PC-9 (cell line): ENCODE measurements at regions of chr6 and their contacts with region 1.

Region 1: DNA sequence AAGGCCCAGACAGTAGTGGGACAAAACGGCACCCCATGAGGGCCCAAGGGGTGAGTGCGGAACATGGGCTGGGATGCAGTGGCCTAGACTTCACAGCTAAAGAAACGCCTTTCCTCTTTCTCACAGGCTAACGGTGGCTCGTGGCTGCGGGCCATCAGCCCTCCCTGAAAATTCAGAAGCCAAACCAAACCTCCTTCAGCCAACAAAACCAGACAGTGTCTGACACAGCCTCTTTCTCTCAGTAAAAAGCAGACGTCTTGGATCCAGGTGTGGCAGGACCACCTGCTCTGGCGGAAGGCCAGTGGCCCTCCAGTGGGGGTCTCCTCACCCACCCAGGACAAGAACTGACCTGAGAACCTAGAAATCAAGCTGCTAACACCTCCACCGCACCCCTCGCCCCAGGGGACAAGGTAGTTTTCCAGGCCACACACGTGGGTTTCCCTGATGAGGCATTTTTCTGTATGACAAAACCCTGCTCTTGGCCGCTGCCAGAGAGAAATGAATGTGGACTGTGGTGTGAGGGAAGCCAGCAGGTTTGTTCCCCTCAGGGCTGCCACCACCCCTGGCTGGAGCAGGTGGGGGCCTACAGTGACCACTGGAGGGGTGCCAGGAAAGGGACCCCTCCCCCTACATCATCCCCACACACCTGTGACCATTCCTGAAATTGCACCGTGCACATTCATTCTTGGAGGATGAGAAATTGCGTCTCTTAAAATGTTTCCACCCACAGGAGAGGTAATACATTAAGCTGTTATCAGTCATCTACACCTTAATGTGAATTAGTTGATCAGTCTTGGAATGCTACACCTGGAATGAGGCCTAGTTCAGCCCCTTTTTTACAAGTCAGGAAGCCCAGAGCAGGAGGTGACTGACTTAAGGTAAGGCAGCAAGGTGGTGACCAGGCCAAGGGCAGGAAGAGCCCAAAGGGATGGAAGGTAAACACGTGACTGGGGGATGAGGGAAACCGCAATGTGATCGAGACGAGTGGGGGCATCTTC is 76.7 kb upstream of the PIM1 start:
- DNase-seq: peak; percentile 95 to 99
- H3K4me3 ChIP-seq: peak overlapping the region; percentile 15; the same call in 1 of the 2 replicates
- H3K27ac ChIP-seq: peak overlapping the region; percentile 93
- H3K4me1 ChIP-seq: peaks cover 50% of the 10 kb centered on the region
- H3K27me3 ChIP-seq: no peaks in the 10 kb centered on the region
- CTCF ChIP-seq: no peak

Region 2: GRCh38 chr6:36780442-36781177 is 312.6 kb before region 1 on chr6:
- CTCF ChIA-PET with region 1: no interaction called
- POLR2A ChIA-PET with region 1: interaction called, 10 read pairs
- intact Hi-C with region 1: no loop called
- DNase-seq: no peak
- H3K4me3 ChIP-seq: no peak overlapping the region
- H3K27ac ChIP-seq: no peak overlapping the region
- H3K4me1 ChIP-seq: peaks cover 7% of the 10 kb centered on the region
- H3K27me3 ChIP-seq: no peaks in the 10 kb centered on the region
- CTCF ChIP-seq: no peak

Region 3: GRCh38 chr6:37074053-37074827 is 19.0 kb before region 1 on chr6:
- CTCF ChIA-PET with region 1: interaction called, 5 read pairs
- POLR2A ChIA-PET with region 1: interaction called, 6 read pairs
- intact Hi-C with region 1: loop called (anchors 1 kb)
- DNase-seq: peak; percentile 44 to 51
- H3K4me3 ChIP-seq: no peak overlapping the region
- H3K27ac ChIP-seq: no peak overlapping the region
- H3K4me1 ChIP-seq: peaks cover 44% of the 10 kb centered on the region
- H3K27me3 ChIP-seq: no peaks in the 10 kb centered on the region
- CTCF ChIP-seq: no peak

Region 4: GRCh38 chr6:37137201-37138090 is 44.2 kb after region 1 on chr6:
- CTCF ChIA-PET with region 1: interaction called, 3 read pairs
- POLR2A ChIA-PET with region 1: no interaction called
- intact Hi-C with region 1: loop called (anchors 1 kb)
- DNase-seq: peak; percentile 81 to 98
- H3K4me3 ChIP-seq: peak overlapping the region; percentile 56
- H3K27ac ChIP-seq: peak overlapping the region; percentile 98
- H3K4me1 ChIP-seq: peaks cover 88% of the 10 kb centered on the region
- H3K27me3 ChIP-seq: no peaks in the 10 kb centered on the region
- CTCF ChIP-seq: no peak

Region 5: GRCh38 chr6:37180075-37180474 is 86.9 kb after region 1 on chr6:
- CTCF ChIA-PET with region 1: no interaction called
- POLR2A ChIA-PET with region 1: interaction called, 14 read pairs
- intact Hi-C with region 1: no loop called
- DNase-seq: no peak
- H3K4me3 ChIP-seq: no peak overlapping the region
- H3K27ac ChIP-seq: no peak overlapping the region
- H3K4me1 ChIP-seq: no peaks in the 10 kb centered on the region
- H3K27me3 ChIP-seq: no peaks in the 10 kb centered on the region
- CTCF ChIP-seq: no peak

Region 6: DNA sequence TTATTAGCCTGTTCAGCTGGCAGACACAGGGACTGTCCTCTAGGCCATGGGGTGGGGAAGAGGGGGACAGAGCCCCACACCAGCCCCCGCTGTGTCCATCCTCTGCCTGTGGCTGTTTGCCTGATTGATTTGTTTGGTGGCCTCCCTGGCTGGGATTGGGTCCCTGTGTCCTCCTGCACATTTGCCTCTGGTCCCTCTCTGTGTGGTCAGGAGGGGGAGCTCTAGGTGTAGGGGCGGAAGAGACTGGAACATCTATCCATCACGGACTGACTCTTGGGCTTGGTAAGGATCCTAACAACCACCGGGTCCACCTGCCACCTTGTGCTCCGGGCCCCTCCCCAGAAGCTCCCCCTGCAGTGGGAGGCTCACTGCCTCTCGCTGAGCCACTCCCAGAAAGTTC is 444.9 kb after region 1 on chr6:
- CTCF ChIA-PET with region 1: no interaction called
- POLR2A ChIA-PET with region 1: interaction called, 13 read pairs
- intact Hi-C with region 1: no loop called
- DNase-seq: peak in 1 of 2 experiments; percentile 50
- H3K4me3 ChIP-seq: no peak overlapping the region
- H3K27ac ChIP-seq: no peak overlapping the region
- H3K4me1 ChIP-seq: no peaks in the 10 kb centered on the region
- H3K27me3 ChIP-seq: no peaks in the 10 kb centered on the region
- CTCF ChIP-seq: peak; percentile 69